Right ventricle myocardium inferior (tissue), 1 donor: ENCODE measurements at regions of chr6 and their contacts with region 1.

Region 1: DNA sequence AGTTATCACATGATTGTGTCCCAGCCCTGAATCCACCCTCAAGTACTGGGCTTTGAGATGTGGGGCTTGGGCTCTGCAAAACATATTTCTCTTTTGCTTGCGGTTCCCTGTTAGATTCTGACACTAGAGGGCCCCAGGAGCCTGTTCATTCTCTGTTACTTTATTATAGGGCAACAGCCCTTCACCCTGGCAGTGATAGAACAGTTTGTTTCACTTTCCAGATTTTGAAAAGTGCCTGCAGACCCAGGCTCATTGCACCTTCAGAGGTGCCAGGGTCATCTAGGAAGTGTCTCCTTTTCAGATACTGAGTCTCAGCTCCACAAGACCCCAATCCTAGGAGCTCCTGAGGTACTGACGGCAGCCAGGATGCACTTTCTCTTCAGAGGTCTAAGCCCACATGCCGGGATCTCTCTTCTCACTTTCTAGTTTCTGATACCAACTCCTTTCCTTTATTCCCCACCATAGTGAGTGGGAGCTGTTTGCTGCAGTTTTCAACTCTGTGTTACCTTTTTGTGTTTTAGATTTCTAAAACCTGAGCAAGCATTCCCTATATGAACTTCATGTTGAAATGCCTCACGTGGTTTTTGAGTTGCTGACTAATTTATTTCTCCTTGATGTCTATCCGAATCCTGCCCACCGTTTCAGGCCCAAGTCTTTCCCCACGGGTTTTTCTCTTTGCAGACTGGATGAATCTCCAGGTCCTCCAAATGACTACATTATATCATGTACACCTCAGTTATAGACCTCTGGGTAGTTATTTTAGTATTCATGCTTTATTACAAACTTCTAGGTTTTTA is 10.9 kb downstream of the ABT1 start:
- DNase-seq: no peak
- ATAC-seq: peak; percentile 50

Region 2: GRCh38 chr6:26401987-26402658 is 205.5 kb before region 1 on chr6 and contains the start of gene BTN3A1:
- intact Hi-C with region 1: no loop called
- DNase-seq: peak; percentile 76
- ATAC-seq: peak; percentile 92
- total RNA-seq, gene BTN3A1: 11.2 TPM

Region 3: DNA sequence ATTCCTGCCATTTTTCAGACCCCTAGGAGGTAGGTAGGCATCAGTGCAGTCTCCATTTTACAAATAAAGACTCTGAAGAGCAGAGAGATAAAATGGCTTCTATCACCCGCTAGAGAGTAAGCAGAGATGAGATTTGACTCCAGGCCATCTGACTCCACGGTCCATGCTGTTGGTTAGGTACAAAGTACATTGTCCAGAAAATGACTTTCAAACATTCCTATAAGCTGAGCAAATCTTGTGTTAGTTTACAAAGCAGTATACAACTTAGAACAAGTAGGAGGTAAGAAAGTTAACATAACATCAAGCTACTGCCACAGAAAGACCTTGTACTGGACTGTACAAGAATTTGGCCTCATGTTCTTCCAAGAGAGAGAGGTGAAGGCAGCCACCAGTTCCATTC is 92.6 kb before region 1 on chr6:
- intact Hi-C with region 1: no loop called
- DNase-seq: no peak
- ATAC-seq: no peak

Region 4: DNA sequence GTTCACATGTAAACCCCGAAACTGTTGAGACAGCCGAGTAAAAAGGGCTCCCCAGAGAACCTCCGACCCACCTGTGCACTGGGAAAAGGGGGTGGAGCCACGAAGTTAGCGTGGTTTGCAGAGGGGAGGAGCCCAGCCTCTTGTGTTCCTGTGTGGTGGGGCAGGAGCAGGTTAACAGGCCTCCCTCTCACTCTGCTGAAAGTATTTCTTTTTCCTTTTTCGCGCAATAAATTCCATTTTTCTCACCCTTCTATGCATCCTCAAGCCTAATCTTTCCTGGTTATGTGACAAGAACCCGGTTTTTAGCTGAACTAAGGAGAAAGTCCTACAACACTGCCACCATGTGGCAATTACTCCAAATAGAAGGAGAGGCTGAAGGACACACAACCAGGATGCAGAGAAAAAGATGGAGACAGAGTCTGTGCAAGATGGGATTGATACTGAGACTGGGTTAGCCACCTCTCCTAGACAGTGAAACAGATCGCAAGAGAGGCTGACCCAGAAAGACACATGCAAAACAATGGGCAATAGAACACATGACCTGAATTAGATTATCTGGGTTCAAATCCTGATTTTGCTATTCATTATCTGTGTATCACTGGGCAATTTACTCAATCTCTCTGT is 471.2 kb after region 1 on chr6:
- intact Hi-C with region 1: loop called (anchors 1 kb)
- DNase-seq: no peak
- ATAC-seq: no peak